ENCODE measurements at regions of chr9 and their contacts with region 1.

Region 1: GRCh38 chr9:99184475-99185347 is 37.0 kb downstream of the ALG2 start:
- DNase-seq: peak; percentile 56 to 87 (median 66)
- ATAC-seq: peak; percentile 93
- H3K4me3 ChIP-seq: peak overlapping the region; percentile 29
- H3K4me3 Mint-ChIP-seq: no peak overlapping the region
- H3K27ac ChIP-seq: no peak overlapping the region
- H3K27ac Mint-ChIP-seq: no peak overlapping the region
- H3K4me1 ChIP-seq: peaks cover 12% of the 10 kb centered on the region
- H3K4me1 Mint-ChIP-seq: peaks cover 18% of the 10 kb centered on the region
- H3K27me3 ChIP-seq: no peaks in the 10 kb centered on the region
- H3K27me3 Mint-ChIP-seq: peaks cover 6% of the 10 kb centered on the region
- CTCF ChIP-seq: peak; percentile 97

Region 2: GRCh38 chr9:99162759-99163364 is 21.8 kb before region 1 on chr9:
- CTCF ChIA-PET with region 1: no interaction called
- POLR2A ChIA-PET with region 1: no interaction called
- intact Hi-C with region 1: loop called in 1 of 2 experiments (anchors 1 kb)
- DNase-seq: peak in 3 of 14 experiments; percentile 43 to 62 (median 61)
- ATAC-seq: peak; percentile 52
- H3K4me3 ChIP-seq: no peak overlapping the region
- H3K4me3 Mint-ChIP-seq: no peak overlapping the region
- H3K27ac ChIP-seq: no peak overlapping the region
- H3K27ac Mint-ChIP-seq: no peak overlapping the region
- H3K4me1 ChIP-seq: peaks cover 3% of the 10 kb centered on the region
- H3K4me1 Mint-ChIP-seq: peaks cover 15% of the 10 kb centered on the region
- H3K27me3 ChIP-seq: no peaks in the 10 kb centered on the region
- H3K27me3 Mint-ChIP-seq: peaks cover 15% of the 10 kb centered on the region
- CTCF ChIP-seq: peak; percentile 66

Region 3: GRCh38 chr9:99221621-99222415 is 37.1 kb after region 1 on chr9 and contains the starts of genes ALG2 and SEC61B:
- CTCF ChIA-PET with region 1: no interaction called
- POLR2A ChIA-PET with region 1: interaction called, 3 read pairs
- intact Hi-C with region 1: loop called in 1 of 2 experiments (anchors 5 kb)
- DNase-seq: peak; percentile 87 to 96 (median 90)
- ATAC-seq: peak; percentile 84
- H3K4me3 ChIP-seq: peak within 1 kb of the TSS; percentile 91
- H3K4me3 Mint-ChIP-seq: peak within 1 kb of the TSS; percentile 98
- H3K27ac ChIP-seq: peak within 1 kb of the TSS; percentile 89 to 95
- H3K27ac Mint-ChIP-seq: peak within 1 kb of the TSS; percentile 99
- H3K4me1 ChIP-seq: peaks cover 33% of the 10 kb centered on the region
- H3K4me1 Mint-ChIP-seq: peaks cover 81% of the 10 kb centered on the region
- H3K27me3 ChIP-seq: no peaks in the 10 kb centered on the region
- H3K27me3 Mint-ChIP-seq: no peaks in the 10 kb centered on the region
- CTCF ChIP-seq: no peak
- total RNA-seq, gene ALG2: 18.1 to 19.9 TPM
- total RNA-seq, gene SEC61B: 83.4 to 84.2 TPM

Region 4: DNA sequence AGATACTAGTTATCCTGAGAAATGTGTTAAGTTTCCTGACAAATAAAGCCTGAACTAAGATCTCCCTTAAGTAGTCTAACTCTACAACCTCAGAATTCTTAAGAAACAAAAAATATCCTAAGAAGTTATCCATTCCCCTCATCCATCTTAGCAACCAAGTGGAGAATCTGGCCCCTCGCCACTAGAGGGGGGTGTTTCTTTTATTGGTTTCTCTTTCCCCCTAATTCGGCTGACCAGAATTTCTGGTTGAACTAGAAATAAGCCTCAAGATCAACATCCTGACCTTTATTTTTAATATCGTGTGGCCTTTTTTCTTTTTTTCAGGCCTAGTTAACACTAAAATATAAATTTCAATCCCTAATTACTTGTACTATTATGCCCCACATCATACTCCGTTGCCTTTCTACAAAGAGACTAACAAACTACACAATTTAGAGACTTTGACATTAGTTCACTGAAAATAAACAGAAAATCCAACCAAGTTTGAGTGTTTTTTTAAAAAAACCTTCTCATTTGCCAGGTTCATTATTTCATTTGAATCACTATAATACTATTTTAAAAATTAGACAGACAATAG is 622.7 kb after region 1 on chr9:
- CTCF ChIA-PET with region 1: no interaction called
- POLR2A ChIA-PET with region 1: no interaction called
- intact Hi-C with region 1: loop called in 1 of 2 experiments (anchors 10 kb)
- DNase-seq: peak; percentile 53 to 85 (median 59)
- ATAC-seq: peak; percentile 84
- H3K4me3 ChIP-seq: no peak overlapping the region
- H3K4me3 Mint-ChIP-seq: no peak overlapping the region
- H3K27ac ChIP-seq: no peak overlapping the region
- H3K27ac Mint-ChIP-seq: no peak overlapping the region
- H3K4me1 ChIP-seq: no peaks in the 10 kb centered on the region
- H3K4me1 Mint-ChIP-seq: no peaks in the 10 kb centered on the region
- H3K27me3 ChIP-seq: no peaks in the 10 kb centered on the region
- H3K27me3 Mint-ChIP-seq: peaks cover 4% of the 10 kb centered on the region
- CTCF ChIP-seq: peak; percentile 95

Region 5: GRCh38 chr9:100011062-100011681 is 826.5 kb after region 1 on chr9:
- CTCF ChIA-PET with region 1: no interaction called
- POLR2A ChIA-PET with region 1: no interaction called
- intact Hi-C with region 1: loop called in 1 of 2 experiments (anchors 10 kb)
- DNase-seq: peak in 8 of 14 experiments; percentile 3 to 75 (median 38)
- ATAC-seq: peak; percentile 58
- H3K4me3 ChIP-seq: no peak overlapping the region
- H3K4me3 Mint-ChIP-seq: no peak overlapping the region
- H3K27ac ChIP-seq: no peak overlapping the region
- H3K27ac Mint-ChIP-seq: no peak overlapping the region
- H3K4me1 ChIP-seq: no peaks in the 10 kb centered on the region
- H3K4me1 Mint-ChIP-seq: no peaks in the 10 kb centered on the region
- H3K27me3 ChIP-seq: no peaks in the 10 kb centered on the region
- H3K27me3 Mint-ChIP-seq: no peaks in the 10 kb centered on the region
- CTCF ChIP-seq: peak; percentile 73

Region 6: DNA sequence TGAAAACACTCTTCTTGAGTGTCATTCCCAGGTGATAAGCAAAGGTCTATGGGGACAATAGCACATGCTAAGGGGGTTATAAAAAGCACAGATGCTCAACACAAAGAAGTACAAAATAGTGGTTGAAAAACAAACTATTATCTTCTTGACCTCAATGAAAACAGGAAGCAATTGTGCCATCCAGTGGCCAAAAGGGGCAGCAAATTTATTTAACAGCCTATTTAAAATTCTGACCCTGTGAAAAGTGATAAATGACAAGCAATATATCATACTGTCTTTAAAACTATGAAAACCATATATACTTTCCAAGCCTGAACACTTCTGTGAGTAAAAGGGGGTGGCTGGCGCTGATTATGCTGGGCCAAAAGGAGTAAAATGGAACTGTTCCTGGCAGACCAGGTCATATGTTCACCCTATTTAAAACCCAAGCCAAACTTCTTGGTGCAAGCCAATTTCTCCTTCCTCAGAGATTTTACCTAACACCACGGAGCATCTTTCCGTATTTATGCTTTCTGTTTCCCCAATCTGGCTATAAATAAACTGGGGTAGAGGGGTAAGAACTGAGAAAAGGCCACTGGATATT is 1138.3 kb after region 1 on chr9:
- CTCF ChIA-PET with region 1: no interaction called
- POLR2A ChIA-PET with region 1: no interaction called
- intact Hi-C with region 1: loop called (anchors 1 to 10 kb)
- DNase-seq: peak in 6 of 14 experiments; percentile 2 to 50 (median 27)
- ATAC-seq: no peak
- H3K4me3 ChIP-seq: no peak overlapping the region
- H3K4me3 Mint-ChIP-seq: no peak overlapping the region
- H3K27ac ChIP-seq: no peak overlapping the region
- H3K27ac Mint-ChIP-seq: no peak overlapping the region
- H3K4me1 ChIP-seq: no peaks in the 10 kb centered on the region
- H3K4me1 Mint-ChIP-seq: peaks cover 34% of the 10 kb centered on the region
- H3K27me3 ChIP-seq: no peaks in the 10 kb centered on the region
- H3K27me3 Mint-ChIP-seq: no peaks in the 10 kb centered on the region
- CTCF ChIP-seq: peak; percentile 36

Region 7: GRCh38 chr9:100437860-100438805 is 1253.4 kb after region 1 on chr9:
- CTCF ChIA-PET with region 1: no interaction called
- POLR2A ChIA-PET with region 1: no interaction called
- intact Hi-C with region 1: loop called (anchors 10 kb)
- DNase-seq: peak; percentile 29 to 81 (median 60)
- ATAC-seq: peak; percentile 55
- H3K4me3 ChIP-seq: no peak overlapping the region
- H3K4me3 Mint-ChIP-seq: no peak overlapping the region
- H3K27ac ChIP-seq: no peak overlapping the region
- H3K27ac Mint-ChIP-seq: no peak overlapping the region
- H3K4me1 ChIP-seq: no peaks in the 10 kb centered on the region
- H3K4me1 Mint-ChIP-seq: no peaks in the 10 kb centered on the region
- H3K27me3 ChIP-seq: no peaks in the 10 kb centered on the region
- H3K27me3 Mint-ChIP-seq: no peaks in the 10 kb centered on the region
- CTCF ChIP-seq: peak; percentile 99